ENCODE measurements at regions of chr20 and their contacts with region 1.

Region 1: DNA sequence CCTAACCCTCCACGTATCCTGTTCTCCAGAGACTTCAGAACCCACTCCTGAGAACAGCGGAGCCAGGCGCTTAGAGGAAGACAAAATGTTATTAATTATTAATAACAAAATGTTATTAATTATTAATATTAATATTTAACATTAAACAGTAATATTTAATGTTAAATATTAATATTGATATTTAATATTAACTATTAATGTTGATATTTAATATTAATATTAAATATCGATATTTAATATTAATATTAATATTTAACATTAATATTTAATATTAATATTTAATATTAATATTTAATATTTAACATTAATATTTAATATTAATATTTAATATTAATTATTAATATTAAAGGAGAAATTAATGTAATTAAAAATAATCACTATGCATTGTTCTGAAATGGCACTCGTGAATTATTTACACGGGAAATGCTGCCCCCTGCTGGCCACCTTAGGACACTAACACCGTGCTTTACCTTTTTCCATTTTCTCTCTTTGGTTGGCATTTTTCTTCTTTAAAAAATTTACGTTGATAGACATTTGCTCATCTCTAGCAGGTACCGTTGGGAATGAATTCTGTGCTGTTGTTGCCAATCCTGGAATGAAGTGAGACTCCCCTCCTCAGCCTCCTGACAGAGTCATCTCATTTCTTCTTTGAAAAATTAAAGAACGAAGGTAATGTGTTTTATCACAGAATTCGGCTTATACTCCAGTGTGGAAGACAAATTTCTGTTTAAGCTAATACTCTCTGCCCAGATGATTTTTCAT is 7.5 kb upstream of the GGTLC1 start:
- DNase-seq: peak; percentile 24
- ATAC-seq: peak; percentile 54
- H3K4me3 ChIP-seq: no peak overlapping the region
- H3K27ac ChIP-seq: no peak overlapping the region
- H3K4me1 ChIP-seq: no peaks in the 10 kb centered on the region
- H3K27me3 ChIP-seq: no peaks in the 10 kb centered on the region; the same call in 1 of the 2 replicates
- CTCF ChIP-seq: peak; percentile 75
- POLR2A ChIP-seq: no peak
- RAD21 ChIP-seq: peak; percentile 50

Region 2: GRCh38 chr20:23794841-23795240 is 201.2 kb before region 1 on chr20:
- CTCF ChIA-PET with region 1: interaction called, 3 read pairs
- POLR2A ChIA-PET with region 1: no interaction called
- dilution Hi-C with region 1: no loop called
- in situ Hi-C with region 1: no loop called
- intact Hi-C with region 1: loop called (anchors 5 kb)
- DNase-seq: no peak
- ATAC-seq: no peak
- H3K4me3 ChIP-seq: no peak overlapping the region
- H3K27ac ChIP-seq: no peak overlapping the region
- H3K4me1 ChIP-seq: no peaks in the 10 kb centered on the region
- H3K27me3 ChIP-seq: peaks cover 2% of the 10 kb centered on the region
- CTCF ChIP-seq: no peak
- POLR2A ChIP-seq: no peak
- RAD21 ChIP-seq: no peak

Region 3: DNA sequence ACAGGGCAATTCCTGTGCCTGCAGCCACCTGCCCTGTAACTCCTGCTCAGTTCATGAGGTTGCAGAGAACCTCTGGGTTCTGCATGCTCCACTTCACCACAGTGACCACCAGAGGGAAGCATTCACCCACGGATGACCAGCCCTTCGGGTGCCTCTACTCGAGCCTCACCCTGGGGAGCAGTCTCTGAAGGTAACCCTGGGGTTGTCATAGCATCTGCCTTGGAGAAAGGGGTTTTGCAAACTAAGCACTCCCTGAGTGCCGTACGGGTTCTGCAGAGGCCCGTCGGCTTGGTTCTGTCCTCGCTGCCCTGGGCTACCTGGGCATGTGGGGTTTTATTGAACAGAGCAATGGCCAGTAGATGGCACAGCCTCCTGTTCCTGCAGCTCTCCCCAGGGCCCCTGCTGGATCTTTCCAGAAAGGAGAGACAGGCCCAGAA is 106.3 kb before region 1 on chr20:
- CTCF ChIA-PET with region 1: interaction called, 3 read pairs
- POLR2A ChIA-PET with region 1: no interaction called
- dilution Hi-C with region 1: no loop called
- in situ Hi-C with region 1: no loop called
- intact Hi-C with region 1: loop called (anchors 1 kb)
- DNase-seq: peak; percentile 24
- ATAC-seq: peak; percentile 93
- H3K4me3 ChIP-seq: no peak overlapping the region
- H3K27ac ChIP-seq: no peak overlapping the region
- H3K4me1 ChIP-seq: no peaks in the 10 kb centered on the region
- H3K27me3 ChIP-seq: no peaks in the 10 kb centered on the region
- CTCF ChIP-seq: peak; percentile 61
- POLR2A ChIP-seq: no peak
- RAD21 ChIP-seq: peak; percentile 69

Region 4: DNA sequence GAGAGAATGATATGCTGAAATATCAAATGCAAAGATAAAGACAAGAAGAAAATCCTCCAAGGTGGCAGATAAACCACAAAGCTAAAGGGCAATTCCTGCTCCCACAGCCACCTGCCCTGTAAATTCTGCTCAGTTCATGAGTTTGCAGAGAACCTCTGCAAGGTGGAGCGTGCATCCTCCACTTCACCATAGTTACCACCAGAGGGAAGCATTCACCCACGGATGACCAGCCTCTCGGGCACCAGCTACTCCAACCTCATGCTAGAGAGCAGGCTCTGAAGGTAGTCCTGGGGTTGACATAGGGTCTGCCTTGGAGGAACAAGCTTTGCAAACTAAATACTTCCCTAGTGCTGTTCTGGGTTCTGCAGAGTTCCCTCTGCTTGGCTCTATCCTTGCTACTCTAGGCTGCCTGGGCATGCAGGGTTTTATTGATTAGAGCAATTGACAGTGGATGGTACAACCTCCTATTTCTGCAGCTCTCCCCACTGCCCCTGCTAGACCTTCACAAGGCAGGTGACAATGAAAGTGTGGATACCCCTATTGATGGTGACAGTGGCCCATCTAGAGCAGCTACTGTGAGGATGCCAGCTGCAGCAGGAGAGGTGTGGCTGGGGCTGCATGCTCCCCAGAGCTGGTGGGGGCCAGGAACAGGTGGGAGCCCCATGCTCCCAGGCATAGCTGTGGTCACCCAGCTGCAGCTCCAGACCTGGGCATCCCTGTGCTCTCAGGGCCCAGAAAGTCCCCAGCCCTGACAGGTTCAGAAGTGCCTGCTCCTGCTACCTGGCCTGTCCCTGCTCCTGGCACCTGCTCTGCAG is 58.6 kb before region 1 on chr20:
- CTCF ChIA-PET with region 1: no interaction called
- POLR2A ChIA-PET with region 1: no interaction called
- dilution Hi-C with region 1: no loop called
- in situ Hi-C with region 1: no loop called
- intact Hi-C with region 1: loop called (anchors 1 kb)
- DNase-seq: peak; percentile 36
- ATAC-seq: peak; percentile 97
- H3K4me3 ChIP-seq: no peak overlapping the region
- H3K27ac ChIP-seq: no peak overlapping the region
- H3K4me1 ChIP-seq: no peaks in the 10 kb centered on the region
- H3K27me3 ChIP-seq: no peaks in the 10 kb centered on the region
- CTCF ChIP-seq: peak; percentile 65
- POLR2A ChIP-seq: no peak
- RAD21 ChIP-seq: peak; percentile 78

Measured in IMR-90 (cell line).